Heart left ventricle (tissue), 16 donors: ENCODE measurements at regions of chr11 and their contacts with region 1.

Region 1: DNA sequence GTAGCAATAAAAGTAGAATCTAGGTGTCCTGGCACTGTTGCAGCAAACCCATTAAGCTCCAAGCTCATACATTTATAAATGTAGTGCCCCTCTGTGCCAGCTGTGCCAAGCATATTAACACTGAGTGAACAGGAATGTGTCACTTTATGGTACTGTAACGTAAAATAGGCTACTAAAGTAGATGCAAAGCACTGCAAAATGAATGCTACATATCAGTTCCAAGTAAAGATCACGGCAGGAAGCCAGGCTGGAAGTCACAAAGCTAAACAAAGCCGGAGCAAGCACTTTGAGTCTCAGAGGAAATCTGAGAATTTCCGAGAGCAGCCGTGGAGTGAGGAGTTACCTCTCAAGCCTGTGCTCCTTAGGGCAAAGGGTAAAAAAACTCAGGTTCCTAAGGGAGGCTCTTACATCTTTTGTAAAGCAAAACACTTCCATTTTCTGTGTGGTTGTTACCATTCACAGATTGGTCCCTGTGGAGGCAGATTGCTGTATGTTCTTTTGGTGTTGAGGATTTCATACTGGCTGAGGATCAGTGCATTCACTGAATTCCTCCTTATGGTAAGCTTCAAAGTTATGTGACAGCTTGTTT is 85.7 kb downstream of the WNT11 start:
- DNase-seq: peak in 4 of 5 donors; percentile 34 to 50 (median 44)
- ATAC-seq: peak; percentile 35 to 69 (median 62)
- H3K4me3 ChIP-seq: peak overlapping the region in 1 of 12 donors; percentile 6
- H3K27ac ChIP-seq: peak overlapping the region in 11 of 12 donors; percentile 2 to 76 (median 52)
- H3K4me1 ChIP-seq: peaks cover 11 to 81% (median 50%) of the 10 kb centered on the region in 12 donors
- H3K27me3 ChIP-seq: no peaks in the 10 kb centered on the region
- CTCF ChIP-seq: no peak
- POLR2A ChIP-seq: peak in 1 of 2 donors; percentile 25

Region 2: DNA sequence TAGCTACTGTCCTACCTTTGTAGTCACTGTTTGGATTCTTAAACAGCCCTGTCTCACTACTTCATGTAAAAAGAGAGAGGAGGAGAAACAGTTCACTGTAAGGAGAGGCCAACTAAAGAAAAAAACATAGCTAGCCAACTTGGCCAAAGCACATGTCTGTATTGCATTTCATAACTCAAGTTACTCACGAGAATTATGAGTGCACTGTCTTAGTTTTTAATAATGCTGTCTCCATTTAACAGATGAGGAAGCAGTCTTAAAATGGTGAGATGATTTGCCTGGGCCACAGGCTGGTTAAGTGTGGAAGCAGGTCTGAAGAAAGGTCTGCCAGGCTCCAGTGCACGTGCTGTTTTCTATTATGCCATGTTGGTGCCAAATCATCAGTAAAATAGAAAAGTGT is 201.1 kb before region 1 on chr11:
- intact Hi-C with region 1: loop called in 1 of 10 experiments (anchors 5 kb)
- DNase-seq: no peak
- ATAC-seq: peak; percentile 51 to 85 (median 62)
- H3K4me3 ChIP-seq: no peak overlapping the region
- H3K27ac ChIP-seq: no peak overlapping the region
- H3K4me1 ChIP-seq: peaks cover 0 to 23% (median 4%) of the 10 kb centered on the region in 12 donors
- H3K27me3 ChIP-seq: no peaks in the 10 kb centered on the region
- CTCF ChIP-seq: no peak
- POLR2A ChIP-seq: no peak

Region 3: GRCh38 chr11:75938543-75938942 is 182.1 kb before region 1 on chr11:
- intact Hi-C with region 1: no loop called
- DNase-seq: no peak
- ATAC-seq: peak in 3 of 4 donors; percentile 42 to 59 (median 58)
- H3K4me3 ChIP-seq: no peak overlapping the region
- H3K27ac ChIP-seq: peak overlapping the region in 1 of 12 donors; percentile 23
- H3K4me1 ChIP-seq: peaks cover 0 to 46% (median 10%) of the 10 kb centered on the region in 12 donors
- H3K27me3 ChIP-seq: no peaks in the 10 kb centered on the region
- CTCF ChIP-seq: no peak
- POLR2A ChIP-seq: no peak

Region 4: DNA sequence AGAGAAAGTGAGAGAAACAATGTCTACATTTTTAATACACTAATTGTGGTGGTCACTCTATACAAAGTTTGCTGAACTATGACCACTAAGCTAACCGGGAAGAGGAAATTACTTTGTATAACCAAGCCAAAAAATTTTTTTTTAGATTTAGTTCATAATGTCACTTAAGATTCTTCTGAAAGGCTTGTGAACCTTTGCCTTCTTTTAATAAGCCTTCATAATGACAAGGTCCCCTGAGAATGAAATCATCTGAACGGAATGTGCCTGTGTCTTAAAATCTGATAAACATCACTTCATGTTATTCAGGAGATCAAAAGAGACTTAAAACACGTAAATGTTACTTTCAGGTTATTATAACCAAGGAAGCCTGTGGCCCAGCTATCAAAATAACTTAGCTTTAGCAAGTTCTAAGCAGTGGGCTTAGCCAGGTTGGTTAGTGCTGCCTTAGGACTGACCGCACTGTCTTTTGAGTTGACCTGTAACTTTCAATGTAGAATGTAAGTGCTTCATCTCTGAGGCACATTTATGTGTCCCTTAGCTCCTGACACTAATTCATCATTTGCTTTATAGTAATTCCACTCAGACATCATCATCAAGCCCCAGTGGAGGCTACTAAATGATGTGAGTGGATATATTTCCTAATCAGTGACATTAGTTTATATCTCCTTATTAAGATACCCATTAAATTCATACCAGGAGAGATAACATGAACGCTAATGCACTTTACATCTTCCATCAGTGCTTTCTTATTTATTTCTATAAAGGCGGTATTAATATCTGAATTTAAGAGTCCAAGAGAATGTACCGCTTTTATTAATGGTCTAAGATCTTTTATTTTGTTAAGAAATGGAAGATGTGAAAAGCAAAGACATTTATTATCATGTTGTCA is 36.8 kb before region 1 on chr11:
- intact Hi-C with region 1: loop called in 2 of 10 experiments (anchors 2 to 5 kb)
- DNase-seq: no peak
- ATAC-seq: peak in 3 of 4 donors; percentile 55 to 84 (median 59)
- H3K4me3 ChIP-seq: no peak overlapping the region
- H3K27ac ChIP-seq: peak overlapping the region; percentile 22 to 79 (median 54)
- H3K4me1 ChIP-seq: peaks cover 0 to 25% (median 10%) of the 10 kb centered on the region in 12 donors
- H3K27me3 ChIP-seq: no peaks in the 10 kb centered on the region
- CTCF ChIP-seq: no peak
- POLR2A ChIP-seq: no peak